ENCODE measurements at regions of chr5 and their contacts with region 1.

Region 1: GRCh38 chr5:36305571-36306326 is 4.0 kb upstream of the RANBP3L start:
- DNase-seq: peak in 1 of 2 donors; percentile 78
- H3K4me3 ChIP-seq: no peak overlapping the region
- H3K27ac ChIP-seq: no peak overlapping the region
- H3K4me1 ChIP-seq: peaks cover 0 to 14% of the 10 kb centered on the region in 2 donors
- H3K27me3 ChIP-seq: no peaks in the 10 kb centered on the region
- CTCF ChIP-seq: peak; percentile 70 to 80 (median 74)

Region 2: GRCh38 chr5:35852084-35852734 is 453.5 kb before region 1 on chr5:
- intact Hi-C with region 1: no loop called
- DNase-seq: no peak
- H3K4me3 ChIP-seq: no peak overlapping the region
- H3K27ac ChIP-seq: no peak overlapping the region
- H3K4me1 ChIP-seq: no peaks in the 10 kb centered on the region
- H3K27me3 ChIP-seq: no peaks in the 10 kb centered on the region
- CTCF ChIP-seq: no peak

Region 3: DNA sequence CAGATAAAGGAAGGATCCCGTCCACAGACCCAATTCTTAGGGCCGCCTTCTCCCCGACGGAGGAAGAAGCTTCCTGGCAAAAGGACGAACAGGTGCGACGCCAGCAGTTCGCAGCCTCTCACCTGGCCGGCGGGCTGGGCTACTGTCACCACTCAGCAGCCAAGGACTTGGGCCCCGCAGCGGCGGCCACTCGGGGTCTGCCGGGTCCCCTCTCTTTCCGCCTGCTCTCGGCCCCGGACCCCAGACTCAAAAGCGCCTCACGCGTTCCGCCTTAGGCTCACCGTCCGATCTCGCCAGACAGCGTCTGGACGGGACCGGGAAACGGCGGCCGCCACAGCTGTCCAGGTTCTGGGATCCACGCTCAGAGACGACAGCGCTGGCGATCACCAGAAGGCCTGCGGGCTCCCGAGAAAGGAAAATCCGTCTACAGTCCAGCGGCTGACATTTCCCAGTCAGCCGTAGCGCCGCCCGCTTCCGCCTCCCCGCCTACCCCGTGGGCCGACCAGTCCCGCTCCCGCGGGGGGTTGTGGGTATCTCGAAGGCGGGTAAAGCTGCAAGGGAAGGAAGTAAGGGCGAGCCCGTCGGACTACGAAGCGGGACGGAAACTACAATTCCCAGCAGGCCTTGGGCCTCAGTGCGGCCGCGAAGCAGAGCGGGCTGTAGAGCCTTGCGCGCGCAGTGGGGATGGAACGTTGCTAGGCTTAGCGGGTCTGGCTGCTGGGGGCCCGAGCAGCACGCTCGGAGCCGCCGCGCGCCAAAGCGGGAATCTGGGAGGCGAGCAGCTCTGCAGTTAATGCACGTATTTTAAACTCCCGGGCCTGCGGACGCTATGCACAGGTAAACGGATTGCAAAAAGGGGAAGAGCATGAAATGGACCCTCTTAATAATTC is 154.1 kb before region 1 on chr5 and contains the starts of genes LMBRD2 and SKP2:
- intact Hi-C with region 1: loop called (anchors 2 kb)
- DNase-seq: peak; percentile 93 to 99
- H3K4me3 ChIP-seq: peak within 1 kb of the TSS; percentile 83 to 92
- H3K27ac ChIP-seq: peak within 1 kb of the TSS; percentile 83 to 84
- H3K4me1 ChIP-seq: peaks cover 0 to 4% of the 10 kb centered on the region in 2 donors
- H3K27me3 ChIP-seq: no peaks in the 10 kb centered on the region
- CTCF ChIP-seq: peak in 1 of 3 experiments; percentile 4
- total RNA-seq, gene LMBRD2: 24.5 TPM
- total RNA-seq, gene SKP2: 14.4 TPM

Region 4: DNA sequence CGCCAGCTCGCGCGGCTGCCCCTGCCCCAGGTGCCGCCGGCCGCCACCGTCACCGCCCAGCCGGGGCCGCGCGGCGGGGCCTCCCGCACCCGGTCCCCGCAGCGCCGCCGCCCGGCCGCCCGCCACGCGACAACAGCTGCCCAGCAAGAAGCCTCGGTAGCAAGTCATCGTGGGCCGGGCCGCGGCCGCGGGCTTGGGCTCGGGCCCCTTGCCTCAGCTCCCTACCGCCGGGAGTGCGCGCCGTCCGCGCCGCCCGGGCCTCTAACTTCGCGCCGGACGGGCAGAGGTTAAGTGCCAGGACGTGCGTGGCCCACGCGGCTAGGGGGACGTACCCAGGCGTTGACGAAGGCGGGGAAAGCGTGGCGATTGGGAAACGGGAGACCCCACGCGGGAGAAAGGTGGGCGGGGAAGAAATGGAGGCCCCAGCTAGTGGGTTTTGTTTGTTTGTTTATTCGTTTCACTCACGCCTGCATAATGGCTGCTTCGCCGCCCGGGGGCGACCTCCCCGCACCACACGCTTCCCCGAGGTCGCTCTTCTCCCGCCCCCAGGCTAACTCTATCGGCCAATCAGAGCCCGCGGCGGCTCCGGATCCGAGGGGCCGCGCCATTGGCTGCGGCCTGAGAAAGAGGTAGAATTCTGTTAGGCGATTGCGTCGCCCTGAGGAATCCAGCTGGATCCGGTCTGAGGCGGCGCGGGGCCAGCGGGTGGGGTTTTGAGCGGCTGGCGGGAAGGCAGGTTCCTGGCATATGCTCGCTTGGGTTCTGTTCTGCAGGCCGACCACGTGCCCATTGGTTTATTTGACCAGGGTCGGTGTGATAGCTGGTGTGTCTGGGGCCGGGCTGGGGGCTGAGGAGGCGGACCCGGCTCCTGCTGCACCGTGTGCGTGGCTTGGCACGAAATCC is 63.9 kb before region 1 on chr5 and contains the start of gene NADK2:
- intact Hi-C with region 1: loop called (anchors 1 kb)
- DNase-seq: peak; percentile 90 to 98
- H3K4me3 ChIP-seq: peak within 1 kb of the TSS; percentile 65 to 88
- H3K27ac ChIP-seq: peak within 1 kb of the TSS; percentile 93 to 95
- H3K4me1 ChIP-seq: peaks cover 0 to 8% of the 10 kb centered on the region in 2 donors
- H3K27me3 ChIP-seq: no peaks in the 10 kb centered on the region
- CTCF ChIP-seq: peak; percentile 60 to 84 (median 74)
- total RNA-seq, gene NADK2: 18.4 TPM

Region 5: GRCh38 chr5:36252722-36253365 is 52.9 kb before region 1 on chr5:
- intact Hi-C with region 1: no loop called
- DNase-seq: no peak
- H3K4me3 ChIP-seq: peak overlapping the region in 1 of 2 donors; percentile 23
- H3K27ac ChIP-seq: peak overlapping the region; percentile 55 to 60
- H3K4me1 ChIP-seq: peaks cover 4 to 18% of the 10 kb centered on the region in 2 donors
- H3K27me3 ChIP-seq: no peaks in the 10 kb centered on the region
- CTCF ChIP-seq: no peak

Region 6: DNA sequence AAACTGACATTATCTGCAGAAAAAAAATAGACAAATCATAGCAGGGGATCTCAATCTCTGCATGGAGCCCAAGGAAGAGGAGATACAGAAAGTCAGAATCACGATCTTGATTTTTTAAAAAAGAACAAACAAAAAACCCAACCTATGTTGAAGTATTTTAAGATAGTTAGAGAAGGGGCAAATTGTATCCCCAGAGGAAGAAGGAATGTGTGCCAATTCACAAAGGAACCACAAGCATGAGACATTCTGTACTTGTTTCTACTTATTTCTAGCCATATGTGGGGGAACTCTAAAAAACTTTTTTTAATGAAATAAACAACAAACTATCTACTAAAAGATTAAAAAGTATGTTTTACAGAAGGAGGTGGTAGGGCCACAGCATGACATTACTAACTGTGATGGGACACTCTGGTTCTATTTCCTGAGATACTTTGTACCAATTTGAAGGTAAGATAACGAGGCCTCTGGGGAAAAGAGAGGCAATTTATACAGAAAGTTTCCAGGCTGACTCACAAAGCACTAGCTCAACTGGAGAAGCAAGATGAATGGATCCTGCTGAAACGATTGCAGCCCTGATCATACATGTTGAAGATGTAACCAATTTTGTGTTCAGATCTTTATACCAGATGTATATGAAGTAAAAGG is 26.6 kb before region 1 on chr5:
- intact Hi-C with region 1: loop called (anchors 2 kb)
- DNase-seq: no peak
- H3K4me3 ChIP-seq: peak overlapping the region; percentile 9 to 26
- H3K27ac ChIP-seq: peak overlapping the region; percentile 64 to 74
- H3K4me1 ChIP-seq: peaks cover 0 to 31% of the 10 kb centered on the region in 2 donors
- H3K27me3 ChIP-seq: no peaks in the 10 kb centered on the region
- CTCF ChIP-seq: no peak

Region 7: GRCh38 chr5:36875790-36876388 is 570.1 kb after region 1 on chr5:
- intact Hi-C with region 1: loop called (anchors 2 kb)
- DNase-seq: peak in 1 of 2 donors; percentile 88
- H3K4me3 ChIP-seq: peak overlapping the region; percentile 87 to 96
- H3K27ac ChIP-seq: peak overlapping the region; percentile 99 to 100
- H3K4me1 ChIP-seq: peaks cover 4 to 29% of the 10 kb centered on the region in 2 donors
- H3K27me3 ChIP-seq: no peaks in the 10 kb centered on the region
- CTCF ChIP-seq: peak; percentile 32 to 59 (median 48)